ENCODE measurements at regions of chr10 and their contacts with region 1.

Region 1: DNA sequence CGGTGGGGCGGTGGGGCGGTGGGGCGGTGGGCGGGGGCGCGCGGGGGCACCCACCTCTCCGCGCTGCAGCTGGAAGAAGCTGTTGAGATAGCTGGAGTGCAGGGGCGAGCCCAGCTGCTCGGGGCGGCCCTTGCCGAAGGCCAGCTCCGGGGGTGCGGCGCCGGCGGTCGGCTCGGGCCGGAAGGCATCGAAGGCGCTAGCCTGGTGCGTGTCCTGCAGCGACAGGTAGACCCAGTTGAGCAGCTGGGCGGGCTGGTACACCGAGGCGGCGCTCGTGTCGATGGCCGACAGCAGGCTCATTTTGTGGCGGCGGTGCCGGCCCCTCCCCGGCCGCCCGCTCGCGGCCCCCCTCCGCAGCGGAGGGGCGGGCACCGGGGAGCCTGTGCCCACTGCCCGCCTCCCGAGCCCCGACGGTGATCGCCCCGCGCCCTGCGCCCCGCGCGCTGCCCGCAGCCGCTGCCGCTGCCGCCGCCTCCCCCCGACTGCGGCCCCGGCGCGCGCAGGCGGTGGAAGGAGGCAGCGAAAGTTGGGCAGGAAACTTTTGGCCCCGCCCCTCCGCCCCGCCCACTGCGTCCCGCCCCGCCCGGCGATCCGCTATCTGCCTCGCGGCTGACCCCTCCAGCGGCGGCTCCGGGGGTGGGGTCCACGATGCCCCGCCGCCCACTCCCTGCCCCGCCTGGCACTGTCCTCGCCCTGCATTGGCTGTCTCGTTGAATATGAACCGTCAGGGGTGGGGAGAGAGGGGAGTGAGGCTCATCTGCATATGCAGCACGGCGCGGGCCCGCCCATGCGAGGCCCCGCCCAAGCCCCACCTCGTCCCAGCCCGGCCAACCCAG is at the start of gene ZCCHC24:
- DNase-seq: peak; percentile 98
- total RNA-seq, gene ZCCHC24: 56.6 TPM

Region 2: DNA sequence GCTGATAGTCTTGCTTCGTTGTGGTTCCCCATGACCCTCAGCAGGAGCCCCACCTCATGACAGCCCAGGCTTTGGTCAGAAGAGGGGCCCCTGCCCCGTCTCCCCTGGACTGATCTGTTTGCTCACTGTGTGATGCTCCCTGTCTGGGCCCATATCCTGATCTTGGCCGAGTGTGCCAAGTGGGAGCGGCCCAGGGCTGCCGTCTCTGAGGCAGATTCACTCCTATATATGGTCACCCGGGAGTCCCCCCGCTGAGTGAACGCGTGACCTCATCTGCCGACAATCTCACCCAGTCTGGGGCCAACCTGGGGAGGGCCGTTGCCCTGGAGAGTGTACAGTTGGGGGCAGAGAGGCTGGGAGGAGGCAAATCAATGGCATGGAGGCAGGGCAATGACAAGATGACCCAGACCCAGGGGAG is 63.5 kb before region 1 on chr10:
- intact Hi-C with region 1: loop called (anchors 2 kb)
- DNase-seq: peak; percentile 88

Region 3: DNA sequence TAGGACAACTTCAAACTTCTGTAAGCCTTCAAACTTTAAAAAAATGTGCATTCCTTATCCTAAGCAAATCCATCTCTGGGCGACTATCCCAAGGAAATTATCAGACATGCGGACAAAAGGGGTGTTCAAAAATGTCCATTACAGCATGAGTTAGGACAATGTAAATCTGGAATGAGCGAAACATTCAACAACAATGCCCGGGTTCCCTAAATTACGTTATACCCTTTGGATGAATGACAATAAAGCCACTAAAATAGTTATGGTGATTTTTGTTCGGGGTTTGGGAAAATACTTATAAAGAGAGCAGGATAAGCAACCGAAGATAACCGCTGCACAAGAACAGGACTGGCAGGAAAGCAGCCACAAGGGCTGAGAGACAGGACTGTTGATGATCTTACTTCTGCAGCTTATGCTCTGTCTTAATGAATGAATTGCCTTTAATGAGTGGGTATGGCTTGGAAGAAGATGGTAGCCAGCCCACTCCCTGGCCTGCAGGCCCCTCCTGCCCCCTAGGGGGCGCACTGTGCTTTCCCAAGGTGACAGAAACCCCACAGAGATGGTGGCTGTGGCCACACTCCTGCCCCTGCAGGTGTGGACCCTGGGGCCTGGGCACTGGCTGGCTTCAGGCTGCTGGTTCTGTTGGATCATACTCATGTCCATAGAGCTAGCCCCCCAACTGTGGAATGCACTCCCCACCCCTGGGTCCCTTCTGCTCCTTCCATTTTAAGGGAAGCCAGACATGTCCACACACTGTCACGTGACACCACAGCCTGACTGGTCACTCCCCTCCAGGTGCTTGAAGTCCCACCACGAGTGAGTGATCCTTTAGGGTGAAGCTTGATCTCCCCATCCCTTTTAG is 45.0 kb before region 1 on chr10:
- intact Hi-C with region 1: loop called (anchors 1 kb)
- DNase-seq: no peak

Region 4: DNA sequence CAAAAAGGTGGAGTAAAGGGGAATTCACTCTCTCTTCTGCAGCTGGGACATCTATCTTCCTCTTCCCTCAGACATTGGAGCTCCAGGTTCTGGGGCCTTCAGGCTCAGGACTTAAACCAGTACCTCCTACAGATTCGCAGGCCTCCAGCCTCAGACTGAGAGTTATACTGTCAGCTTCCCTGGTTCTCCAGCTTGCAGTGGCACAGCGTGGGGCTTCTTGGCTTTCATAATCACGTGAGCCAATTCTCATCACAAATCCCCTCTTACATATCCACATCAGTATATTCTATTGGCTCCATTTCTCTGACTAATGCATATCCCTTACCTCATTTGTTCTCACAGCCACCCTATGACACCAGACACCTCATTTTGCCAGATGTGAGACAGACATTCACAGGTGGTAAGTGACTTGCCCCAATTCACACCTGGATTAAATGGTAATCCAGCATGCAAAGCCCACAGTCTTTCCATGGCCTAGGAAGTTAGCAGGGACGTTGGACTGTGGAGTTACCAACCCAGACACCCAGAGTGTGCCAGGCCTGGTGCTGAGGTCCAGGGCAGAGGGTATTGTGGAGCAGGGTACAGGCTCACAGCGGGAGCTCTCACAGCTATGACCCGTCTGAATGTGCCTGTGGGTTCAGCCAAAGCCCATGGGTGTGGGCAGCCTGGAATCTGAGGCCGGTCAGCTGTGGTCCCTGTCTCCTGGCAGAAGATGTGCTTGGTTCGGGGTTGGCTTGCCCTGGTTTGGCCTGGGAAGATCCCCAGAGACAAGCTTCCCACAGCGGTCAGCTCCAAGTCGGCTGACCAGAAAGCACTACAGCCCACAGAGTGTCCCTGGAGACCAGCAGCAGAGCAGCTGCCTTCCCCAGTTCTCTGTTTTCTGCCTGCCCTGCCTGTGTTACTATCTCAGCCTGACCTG is 18.5 kb after region 1 on chr10:
- intact Hi-C with region 1: loop called (anchors 1 kb)
- DNase-seq: no peak